Ovary (tissue), 10 donors: ENCODE measurements at regions of chr18 and their contacts with region 1.

Region 1: GRCh38 chr18:46220116-46220515 is 115.9 kb downstream of the HAUS1 start:
- DNase-seq: no peak
- H3K4me3 ChIP-seq: no peak overlapping the region
- H3K27ac ChIP-seq: no peak overlapping the region
- H3K4me1 ChIP-seq: peaks cover 1% of the 10 kb centered on the region
- H3K27me3 ChIP-seq: no peaks in the 10 kb centered on the region
- CTCF ChIP-seq: no peak
- EP300 ChIP-seq: no peak
- POLR2A ChIP-seq: no peak

Region 2: GRCh38 chr18:44870631-44871502 is 1349.2 kb before region 1 on chr18:
- intact Hi-C with region 1: no loop called
- DNase-seq: no peak
- H3K4me3 ChIP-seq: no peak overlapping the region
- H3K27ac ChIP-seq: no peak overlapping the region
- H3K4me1 ChIP-seq: peaks cover 1% of the 10 kb centered on the region
- H3K27me3 ChIP-seq: no peaks in the 10 kb centered on the region
- CTCF ChIP-seq: no peak
- EP300 ChIP-seq: no peak
- POLR2A ChIP-seq: no peak

Region 3: DNA sequence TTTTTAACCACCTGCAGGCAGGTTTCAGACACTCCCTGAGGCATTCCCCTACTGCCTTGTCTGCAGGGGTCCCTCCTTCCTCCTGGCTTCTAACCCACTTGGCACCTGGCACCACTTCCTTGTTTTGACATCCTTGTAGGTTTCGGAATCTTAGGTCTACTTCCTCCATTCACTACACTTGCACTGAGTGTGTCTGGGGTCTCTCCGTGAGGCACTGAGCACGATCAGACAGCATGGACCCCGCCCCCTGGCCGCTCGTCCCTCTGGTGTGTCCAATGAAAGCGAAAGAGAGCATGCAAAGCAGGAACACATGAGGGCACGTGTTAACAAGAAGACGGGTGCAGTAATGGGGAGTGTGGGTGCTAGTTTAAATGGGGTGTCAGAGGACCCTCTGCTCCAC is 52.1 kb before region 1 on chr18:
- intact Hi-C with region 1: loop called in 2 of 4 experiments (anchors 10 kb)
- DNase-seq: no peak
- H3K4me3 ChIP-seq: no peak overlapping the region
- H3K27ac ChIP-seq: no peak overlapping the region
- H3K4me1 ChIP-seq: no peaks in the 10 kb centered on the region
- H3K27me3 ChIP-seq: no peaks in the 10 kb centered on the region
- CTCF ChIP-seq: no peak
- EP300 ChIP-seq: no peak
- POLR2A ChIP-seq: no peak

Region 4: DNA sequence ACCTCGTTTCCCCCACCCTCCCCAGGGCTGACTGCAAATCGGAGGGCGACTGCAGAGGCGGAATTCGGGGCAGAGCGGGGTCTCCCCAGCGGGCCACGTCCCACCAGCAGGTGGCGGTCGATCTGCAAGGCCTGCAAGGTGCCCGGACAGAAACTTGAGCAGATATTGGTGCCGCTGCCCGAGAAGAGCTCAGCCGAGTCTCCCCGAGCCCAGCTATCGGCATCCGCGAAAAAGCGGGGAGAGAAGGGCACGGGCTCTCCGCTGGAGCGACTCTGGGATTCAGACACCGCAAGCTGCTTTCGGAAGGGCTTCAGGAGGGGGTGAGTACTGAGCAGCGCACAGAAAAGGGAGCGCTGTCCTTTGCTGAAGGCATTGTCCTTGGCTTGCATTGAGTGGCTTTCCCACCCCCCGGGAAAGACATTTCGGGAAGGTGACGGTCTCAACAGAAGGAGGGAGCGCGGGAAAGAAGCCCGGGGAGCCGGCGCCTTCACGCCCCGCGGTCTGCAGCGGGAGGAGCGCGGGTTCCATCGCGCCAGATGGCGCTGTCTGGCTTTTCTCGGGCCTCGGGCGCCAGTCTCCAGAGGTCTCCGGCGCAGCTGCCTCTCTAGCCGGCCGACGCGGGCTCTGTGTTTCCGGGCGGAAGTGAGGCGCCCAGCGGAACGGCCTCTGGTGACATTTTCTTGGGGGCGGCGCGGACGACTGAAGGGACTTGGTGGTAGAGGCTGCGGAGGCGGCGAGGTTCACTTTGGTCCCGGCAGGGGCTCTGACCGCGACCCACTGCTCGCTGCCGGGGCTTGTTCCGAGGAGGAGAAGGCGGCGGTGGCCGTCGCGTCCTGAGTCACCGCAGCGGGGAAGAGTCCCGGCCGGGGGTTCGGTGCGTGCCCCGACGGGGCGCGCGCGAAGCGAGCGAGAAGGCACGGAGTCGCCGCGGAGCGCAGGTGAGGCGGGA is 46.4 kb before region 1 on chr18:
- intact Hi-C with region 1: loop called in 2 of 4 experiments (anchors 10 kb)
- DNase-seq: peak; percentile 86 to 93 (median 89)
- H3K4me3 ChIP-seq: peak overlapping the region; percentile 93
- H3K27ac ChIP-seq: peak overlapping the region; percentile 23 to 70
- H3K4me1 ChIP-seq: peaks cover 4% of the 10 kb centered on the region
- H3K27me3 ChIP-seq: no peaks in the 10 kb centered on the region
- CTCF ChIP-seq: peak; percentile 57 to 77 (median 62)
- EP300 ChIP-seq: no peak
- POLR2A ChIP-seq: peak; percentile 23

Region 5: DNA sequence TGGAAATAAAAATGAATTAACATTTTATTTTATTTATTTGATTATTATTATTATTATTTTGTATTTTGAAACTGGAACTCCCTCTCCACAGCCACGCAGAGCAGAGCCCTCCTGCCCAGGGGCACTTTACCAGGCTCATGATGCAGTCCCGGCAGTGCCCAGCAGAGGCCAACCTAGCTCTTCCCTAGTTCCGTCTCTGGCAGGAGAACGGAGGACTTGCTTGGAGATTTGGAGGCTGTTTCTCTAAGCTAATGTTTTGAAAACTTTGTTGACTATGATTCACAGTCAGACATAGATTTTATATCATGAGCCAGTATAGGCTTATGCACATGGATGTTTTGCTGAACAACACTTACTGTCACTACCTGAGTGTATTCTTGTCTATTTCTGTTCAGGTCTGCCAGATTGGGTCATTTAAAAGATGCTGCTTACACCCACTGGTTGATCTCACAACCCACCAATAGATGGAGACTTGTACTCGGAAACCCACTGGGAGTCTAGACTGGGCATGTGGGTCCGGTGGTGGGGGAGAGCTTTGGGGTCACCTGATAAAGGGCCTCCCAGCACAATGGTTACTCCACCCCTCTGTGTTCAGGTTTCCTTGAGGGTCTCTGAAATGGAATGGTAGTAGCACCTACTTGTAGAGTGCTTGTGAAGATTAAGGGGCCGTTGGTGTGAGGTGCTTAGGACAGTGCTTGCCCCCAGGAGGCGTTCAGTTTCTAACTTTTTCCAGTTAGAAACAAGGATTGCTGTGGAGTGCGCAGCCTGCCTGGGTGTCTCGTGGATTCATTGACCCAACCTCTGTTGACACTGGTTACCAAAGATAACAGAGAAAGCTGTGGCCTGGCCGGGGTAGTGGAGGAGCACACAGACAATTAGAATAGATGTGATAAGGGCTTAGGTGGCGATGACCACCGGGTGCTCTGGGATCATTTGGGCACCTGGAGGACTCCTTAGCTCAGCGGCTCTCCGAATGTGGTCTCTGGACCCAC is 61.4 kb after region 1 on chr18:
- intact Hi-C with region 1: loop called in 1 of 4 experiments (anchors 10 kb)
- DNase-seq: peak; percentile 24 to 76 (median 49)
- H3K4me3 ChIP-seq: no peak overlapping the region
- H3K27ac ChIP-seq: no peak overlapping the region
- H3K4me1 ChIP-seq: no peaks in the 10 kb centered on the region
- H3K27me3 ChIP-seq: no peaks in the 10 kb centered on the region
- CTCF ChIP-seq: peak; percentile 15 to 48 (median 43)
- EP300 ChIP-seq: no peak
- POLR2A ChIP-seq: no peak

Region 6: GRCh38 chr18:46324087-46324958 is 104.2 kb after region 1 on chr18:
- intact Hi-C with region 1: no loop called
- DNase-seq: no peak
- H3K4me3 ChIP-seq: no peak overlapping the region
- H3K27ac ChIP-seq: no peak overlapping the region
- H3K4me1 ChIP-seq: no peaks in the 10 kb centered on the region
- H3K27me3 ChIP-seq: no peaks in the 10 kb centered on the region
- CTCF ChIP-seq: no peak
- EP300 ChIP-seq: no peak
- POLR2A ChIP-seq: no peak